Cardiac septum (tissue), 1 donor: ENCODE measurements at regions of chr19 and their contacts with region 1.

Region 1: DNA sequence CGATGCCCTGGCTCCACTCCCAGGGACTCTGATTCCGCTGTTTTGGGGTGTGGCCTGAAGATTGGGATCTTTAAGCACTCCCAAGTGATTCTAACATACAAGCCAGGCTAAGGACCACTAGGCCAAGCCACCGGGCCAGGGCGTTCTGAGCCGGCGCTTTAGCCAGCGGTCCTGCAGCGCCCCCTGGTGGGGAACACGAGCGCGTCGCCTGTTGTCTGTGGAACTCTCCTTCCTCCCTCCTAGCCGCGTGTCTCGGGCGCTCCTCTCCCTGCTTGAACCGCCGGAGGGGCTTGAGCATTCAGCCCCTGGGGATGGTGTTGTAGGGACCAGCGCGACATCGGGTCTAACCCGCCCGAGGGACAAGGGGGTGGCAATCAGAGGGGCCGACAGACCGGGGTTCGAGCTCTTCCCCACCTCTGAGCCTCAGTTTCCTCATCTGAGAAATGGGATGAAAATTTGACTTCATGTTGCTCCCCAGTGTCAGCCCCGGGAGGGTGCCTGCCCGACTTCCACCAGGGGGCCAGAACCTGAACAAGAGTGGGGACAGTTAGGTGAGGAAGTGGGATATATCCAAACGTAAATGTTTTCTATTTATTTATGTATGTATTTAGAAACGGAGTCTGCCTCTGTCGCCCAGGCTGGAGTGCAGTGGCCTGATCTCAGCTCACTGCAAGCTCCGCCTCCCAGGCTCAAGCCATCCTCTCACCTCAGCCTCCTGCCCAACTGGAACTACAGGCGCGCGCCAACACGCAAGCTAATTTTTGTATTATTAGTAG is 18.0 kb upstream of the PNMA8B start:
- DNase-seq: peak; percentile 89

Region 2: GRCh38 chr19:46283771-46284170 is 229.9 kb before region 1 on chr19:
- intact Hi-C with region 1: loop called (anchors 2 kb)
- DNase-seq: no peak

Region 3: DNA sequence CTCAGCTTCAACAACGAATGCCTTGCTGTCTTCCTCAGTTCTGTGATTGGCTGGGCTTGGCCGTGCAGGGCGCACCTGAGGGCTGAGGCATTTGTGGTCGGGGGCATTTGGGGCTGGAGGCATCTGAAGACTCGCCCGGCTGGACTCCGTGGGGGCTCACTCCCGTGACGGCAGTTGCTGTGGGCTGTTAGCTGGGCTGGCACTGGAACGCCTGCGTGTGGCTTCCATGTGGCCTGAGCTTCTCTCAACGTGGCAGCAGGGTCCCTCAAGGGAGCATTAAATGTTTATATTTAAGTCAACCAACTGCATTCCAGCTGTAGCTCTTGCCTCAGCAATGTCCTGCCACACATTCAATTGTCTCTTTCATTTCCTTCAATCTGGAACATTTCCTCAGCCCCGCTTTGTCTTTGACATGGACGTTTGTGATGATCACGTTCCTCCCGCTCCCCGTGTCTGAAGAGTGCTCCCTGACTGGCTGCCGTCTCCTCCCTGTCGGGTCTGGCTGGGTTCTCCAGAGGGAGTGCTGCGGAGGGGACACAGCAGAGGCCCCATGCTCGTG is 121.3 kb before region 1 on chr19:
- intact Hi-C with region 1: loop called (anchors 1 kb)
- DNase-seq: no peak

Region 4: GRCh38 chr19:46404055-46404752 is 109.4 kb before region 1 on chr19:
- intact Hi-C with region 1: loop called (anchors 2 kb)
- DNase-seq: peak; percentile 80

Region 5: GRCh38 chr19:46487802-46488445 is 25.7 kb before region 1 on chr19:
- intact Hi-C with region 1: loop called (anchors 1 kb)
- DNase-seq: peak; percentile 85

Region 6: DNA sequence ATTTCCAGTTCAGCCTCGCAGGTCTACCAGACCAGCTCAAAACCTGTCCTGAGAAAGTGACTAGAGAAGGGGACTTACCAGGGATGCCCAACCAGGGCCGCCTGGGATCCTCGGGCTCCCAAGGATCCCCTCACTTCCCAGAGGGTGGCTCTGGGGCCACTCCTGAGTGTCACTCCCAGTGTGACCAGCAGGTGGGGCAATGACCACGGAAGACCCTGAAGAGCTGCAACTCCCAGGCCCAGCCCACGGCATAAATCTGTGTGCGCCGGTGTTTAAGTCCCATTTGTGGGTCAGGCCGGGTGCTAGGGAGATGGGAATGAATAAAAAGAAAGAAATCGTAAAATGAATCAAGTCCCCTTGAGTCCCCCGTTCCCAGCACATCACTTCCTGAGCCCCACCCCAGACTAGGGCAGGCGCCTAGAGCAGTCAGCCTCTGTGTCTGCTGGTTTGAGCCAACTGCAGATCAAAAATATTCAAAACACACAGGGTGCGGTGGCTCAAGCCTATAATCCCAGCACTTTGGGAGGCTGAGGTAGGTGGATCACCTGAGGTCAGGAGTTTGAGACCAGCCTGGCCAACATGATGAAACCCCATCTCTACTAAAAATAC is 100.6 kb after region 1 on chr19:
- intact Hi-C with region 1: no loop called
- DNase-seq: peak; percentile 89